BJ (cell line): ENCODE measurements at regions of chr14 and their contacts with region 1.

Region 1: DNA sequence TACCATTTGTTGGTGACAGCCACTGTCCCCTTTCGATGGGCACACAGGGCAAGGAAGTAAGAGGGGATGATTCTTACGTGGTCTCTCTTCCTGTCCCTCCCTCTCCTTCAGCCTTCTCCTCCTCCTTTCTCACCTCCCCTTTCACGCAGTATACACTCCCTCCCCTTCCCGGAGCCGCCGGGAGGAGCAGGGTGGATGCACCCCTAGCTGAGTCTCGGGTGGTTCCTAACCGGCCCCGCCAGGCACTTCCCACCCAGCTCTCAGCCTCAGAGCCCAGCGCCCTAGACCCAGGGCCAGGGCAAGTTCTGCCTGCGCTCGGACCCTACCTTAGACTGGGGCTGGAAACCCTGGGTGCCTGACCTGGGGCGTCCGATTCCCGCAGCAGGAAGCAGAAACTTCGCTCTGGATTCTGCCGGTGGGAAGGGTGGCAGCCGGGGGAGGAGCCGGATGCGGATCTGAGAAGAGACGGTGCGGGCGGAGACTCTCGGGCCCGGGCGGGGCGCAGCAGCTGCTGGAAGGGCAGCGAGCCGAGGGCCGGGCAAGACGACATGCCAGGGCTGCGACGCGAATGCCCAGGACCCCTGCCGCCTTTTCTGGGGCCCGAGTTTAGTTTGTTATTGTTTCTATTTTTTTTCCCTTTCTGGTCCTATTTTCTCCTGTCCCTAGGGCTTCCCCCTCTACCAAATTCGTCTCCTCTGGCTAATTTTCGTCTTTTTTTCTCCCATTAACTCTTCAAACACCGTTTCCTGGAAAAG is at the start of gene TEP1:
- DNase-seq: peak; percentile 34
- H3K4me3 ChIP-seq: peak within 1 kb of the TSS; percentile 67
- H3K27me3 ChIP-seq: no peaks in the 10 kb centered on the region
- CTCF ChIP-seq: no peak
- polyA plus RNA-seq, gene TEP1: 12.2 and 12.7 TPM in 2 replicates

Region 2: DNA sequence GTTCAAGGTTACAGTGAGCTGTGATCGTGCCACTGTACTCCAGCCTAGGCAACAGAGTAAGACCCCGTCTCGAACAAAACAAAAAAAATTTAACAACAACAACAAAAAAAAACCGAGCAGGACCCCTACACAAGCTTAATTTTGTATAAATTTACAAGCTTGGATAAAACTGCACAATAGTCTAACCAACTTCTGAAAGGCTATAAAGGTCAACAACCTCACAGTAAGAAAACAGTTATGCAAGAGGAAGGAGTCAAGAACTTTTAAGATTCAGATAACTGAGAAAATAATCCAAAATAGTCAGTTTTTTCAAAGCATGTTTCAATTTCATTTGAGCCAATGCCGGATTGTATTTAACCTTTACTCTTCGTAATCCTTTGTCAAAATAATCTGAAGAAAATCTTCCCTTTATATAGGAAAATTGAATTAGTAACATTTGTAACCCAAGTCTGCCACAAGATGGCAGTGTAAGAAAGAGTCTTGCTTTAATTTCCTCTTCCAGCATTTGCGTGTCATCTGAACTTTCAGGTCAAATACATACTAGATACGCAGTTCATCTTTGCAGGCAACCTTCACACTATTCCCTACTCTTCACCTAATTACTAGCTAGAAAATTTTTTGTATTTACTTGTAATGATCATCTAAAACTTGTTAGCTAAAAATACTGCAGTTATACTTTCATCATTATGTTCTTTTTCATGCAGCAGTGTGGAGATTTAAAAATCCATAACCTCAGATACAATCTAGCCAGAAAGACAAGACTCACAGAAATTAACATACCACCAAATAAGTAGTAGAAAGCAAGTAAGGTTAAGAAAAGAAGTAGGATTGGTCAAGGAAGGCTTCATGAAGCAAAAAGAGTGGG is 86.0 kb before region 1 on chr14:
- CTCF ChIA-PET with region 1: interaction called, 12 read pairs
- POLR2A ChIA-PET with region 1: no interaction called
- DNase-seq: no peak
- H3K4me3 ChIP-seq: no peak overlapping the region
- H3K27me3 ChIP-seq: no peaks in the 10 kb centered on the region
- CTCF ChIP-seq: peak; percentile 67

Region 3: DNA sequence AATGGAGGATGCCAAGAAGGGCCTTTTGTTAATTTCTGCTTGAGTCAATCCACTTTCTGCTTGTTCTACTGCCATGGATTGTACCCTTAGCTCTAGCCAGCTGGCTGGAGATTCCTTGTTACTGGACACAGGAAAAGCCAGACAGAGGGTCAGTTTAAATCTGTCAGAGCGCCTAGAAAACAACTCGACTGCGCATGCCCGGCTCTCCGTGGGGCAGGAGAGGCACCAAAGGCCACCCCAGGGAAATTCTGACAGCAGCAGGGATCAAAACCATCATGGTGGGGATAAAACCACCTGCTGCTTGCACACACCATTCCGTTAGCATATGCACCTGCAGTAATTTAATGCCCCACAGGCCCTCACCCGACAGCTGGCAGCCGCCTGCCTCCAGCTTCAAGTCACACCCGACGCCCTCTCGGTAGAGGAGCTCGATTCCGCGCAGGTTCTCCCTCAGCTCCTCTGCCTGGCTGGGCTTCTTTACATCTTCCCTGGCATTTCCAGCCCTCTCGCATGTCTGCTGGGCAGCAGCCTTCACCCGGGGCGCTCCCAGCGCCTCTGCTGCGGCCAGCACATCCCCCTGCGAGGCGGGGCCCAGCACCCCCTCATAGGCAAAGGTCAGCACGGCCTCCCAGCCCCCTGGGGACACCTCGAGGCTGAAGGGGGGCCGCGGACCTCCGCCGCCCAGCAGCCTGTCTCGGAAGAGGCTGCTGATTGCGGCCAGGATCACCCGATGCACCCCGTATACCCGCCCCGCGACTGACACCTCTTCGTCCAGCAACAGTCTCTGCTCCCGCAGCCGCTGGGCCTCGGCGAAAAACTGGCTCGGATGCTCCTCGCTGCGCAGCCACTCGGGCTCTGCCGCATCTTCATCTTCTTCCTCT is 21.7 kb after region 1 on chr14:
- CTCF ChIA-PET with region 1: interaction called, 17 read pairs
- POLR2A ChIA-PET with region 1: no interaction called
- DNase-seq: no peak
- H3K4me3 ChIP-seq: no peak overlapping the region
- H3K27me3 ChIP-seq: no peaks in the 10 kb centered on the region
- CTCF ChIP-seq: no peak

Region 4: DNA sequence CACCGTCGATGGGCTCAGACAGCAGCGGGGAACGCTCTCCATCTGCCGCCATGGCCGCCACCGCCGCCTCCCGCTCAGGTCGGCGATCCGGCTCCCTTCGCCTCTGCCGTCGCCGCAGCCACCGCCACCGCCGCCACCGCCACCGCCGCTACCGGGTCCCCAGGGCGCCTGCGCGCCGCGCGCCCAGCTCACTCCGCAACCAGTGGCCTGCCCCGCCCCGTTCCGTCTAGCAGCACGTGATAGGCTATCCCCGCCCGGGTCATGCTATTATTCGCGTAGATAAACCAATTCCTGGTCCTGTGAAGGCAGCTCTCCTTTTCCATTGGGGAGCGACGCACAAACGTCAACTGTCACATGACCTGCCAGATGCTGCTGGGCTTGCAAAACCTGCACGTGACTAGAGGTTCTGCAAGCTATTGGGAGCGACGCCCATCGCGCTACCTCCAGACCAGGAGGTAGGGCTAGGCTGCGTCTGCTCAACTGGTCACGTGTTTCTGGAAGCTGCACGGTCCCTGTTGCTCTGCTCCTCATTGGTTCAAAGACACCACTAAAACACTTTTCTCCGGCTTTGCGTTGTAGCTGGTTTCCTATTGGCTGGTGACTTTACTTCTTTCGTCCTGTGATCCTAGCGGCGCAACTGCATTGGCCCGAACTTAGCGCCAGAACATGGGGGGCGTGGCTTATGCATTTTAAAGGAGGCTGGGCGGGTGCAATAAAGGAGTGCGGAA is 48.2 kb after region 1 on chr14 and contains the start of gene PIP4P1:
- CTCF ChIA-PET with region 1: interaction called, 10 read pairs
- POLR2A ChIA-PET with region 1: no interaction called
- DNase-seq: peak; percentile 100
- H3K4me3 ChIP-seq: peak within 1 kb of the TSS; percentile 94
- H3K27me3 ChIP-seq: peaks cover 1% of the 10 kb centered on the region; the same call in 1 of the 2 replicates
- CTCF ChIP-seq: no peak
- polyA plus RNA-seq, gene PIP4P1: 28.6 and 38.3 TPM in 2 replicates

Region 5: GRCh38 chr14:20613094-20614037 is 200.1 kb after region 1 on chr14:
- CTCF ChIA-PET with region 1: interaction called, 11 read pairs
- POLR2A ChIA-PET with region 1: no interaction called
- DNase-seq: peak; percentile 86
- H3K4me3 ChIP-seq: peak overlapping the region; percentile 47
- H3K27me3 ChIP-seq: no peaks in the 10 kb centered on the region; the same call in 1 of the 2 replicates
- CTCF ChIP-seq: peak; percentile 70